Common myeloid progenitor, CD34-positive (primary cell): ENCODE measurements at regions of chr4 and their contacts with region 1.

Region 1: GRCh38 chr4:53015681-53016080 is 153.6 kb downstream of the RASL11B start:
- DNase-seq: peak; percentile 74 to 81 (median 76)
- H3K4me3 ChIP-seq: no peak overlapping the region
- H3K27ac ChIP-seq: no peak overlapping the region
- H3K4me1 ChIP-seq: peaks cover 13 to 50% (median 35%) of the 10 kb centered on the region in 4 experiments
- H3K27me3 ChIP-seq: no peaks in the 10 kb centered on the region

Region 2: GRCh38 chr4:53005149-53005546 is 10.5 kb before region 1 on chr4:
- CTCF ChIA-PET with region 1: interaction called, 10 read pairs
- POLR2A ChIA-PET with region 1: no interaction called
- DNase-seq: peak in 2 of 3 donors; percentile 40 to 59
- H3K4me3 ChIP-seq: peak overlapping the region in 2 of 7 experiments; percentile 17 to 44
- H3K27ac ChIP-seq: no peak overlapping the region
- H3K4me1 ChIP-seq: peaks cover 0 to 53% (median 34%) of the 10 kb centered on the region in 4 experiments
- H3K27me3 ChIP-seq: no peaks in the 10 kb centered on the region

Region 3: GRCh38 chr4:53804719-53805118 is 789.0 kb after region 1 on chr4:
- CTCF ChIA-PET with region 1: interaction called, 16 read pairs
- POLR2A ChIA-PET with region 1: no interaction called
- DNase-seq: peak; percentile 49 to 81 (median 69)
- H3K4me3 ChIP-seq: no peak overlapping the region
- H3K27ac ChIP-seq: no peak overlapping the region
- H3K4me1 ChIP-seq: no peaks in the 10 kb centered on the region
- H3K27me3 ChIP-seq: peaks cover 0 to 2% (median 0%) of the 10 kb centered on the region in 5 experiments